ENCODE measurements at regions of chr18 and their contacts with region 1.

Region 1: GRCh38 chr18:36441426-36442240 is 144.1 kb downstream of the FHOD3 start:
- DNase-seq: no peak
- ATAC-seq: peak; percentile 10; the same call in 2 of the 3 replicates
- H3K4me3 ChIP-seq: no peak overlapping the region
- H3K27ac ChIP-seq: no peak overlapping the region
- H3K4me1 ChIP-seq: no peaks in the 10 kb centered on the region
- H3K27me3 ChIP-seq: no peaks in the 10 kb centered on the region
- CTCF ChIP-seq: no peak
- EP300 ChIP-seq: peak in 1 of 2 experiments; percentile 16; a peak in 1 of 4 replicates
- POLR2A ChIP-seq: no peak
- RAD21 ChIP-seq: no peak

Region 2: DNA sequence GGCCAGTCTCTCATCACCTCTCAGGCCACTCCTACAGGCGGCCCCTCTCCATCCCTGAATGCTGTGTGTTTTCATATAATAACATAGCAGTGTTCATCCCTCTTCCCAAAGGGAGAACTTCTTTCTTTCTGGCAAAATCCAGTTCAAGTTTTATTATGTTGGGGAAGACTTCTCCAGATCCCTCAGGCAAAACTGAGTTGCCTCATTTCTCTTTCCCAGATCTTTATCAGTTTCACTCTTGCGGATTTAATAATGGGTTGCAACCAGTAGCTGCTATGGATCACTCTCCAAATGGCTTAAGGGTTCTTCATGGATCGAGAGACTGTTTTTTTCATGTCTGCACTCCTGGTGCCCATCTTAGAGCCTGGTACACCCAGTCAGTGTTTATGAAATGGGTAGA is 14.3 kb before region 1 on chr18:
- CTCF ChIA-PET with region 1: interaction called, 83 read pairs
- POLR2A ChIA-PET with region 1: interaction called, 5 read pairs
- RAD21 ChIA-PET with region 1: interaction called, 34 read pairs
- SMC1A ChIA-PET with region 1: interaction called, 253 read pairs
- in situ Hi-C with region 1: no loop called
- intact Hi-C with region 1: no loop called
- DNase-seq: no peak
- ATAC-seq: no peak
- H3K4me3 ChIP-seq: no peak overlapping the region
- H3K27ac ChIP-seq: no peak overlapping the region
- H3K4me1 ChIP-seq: no peaks in the 10 kb centered on the region
- H3K27me3 ChIP-seq: no peaks in the 10 kb centered on the region
- CTCF ChIP-seq: no peak
- EP300 ChIP-seq: no peak
- POLR2A ChIP-seq: no peak
- RAD21 ChIP-seq: no peak

Region 3: DNA sequence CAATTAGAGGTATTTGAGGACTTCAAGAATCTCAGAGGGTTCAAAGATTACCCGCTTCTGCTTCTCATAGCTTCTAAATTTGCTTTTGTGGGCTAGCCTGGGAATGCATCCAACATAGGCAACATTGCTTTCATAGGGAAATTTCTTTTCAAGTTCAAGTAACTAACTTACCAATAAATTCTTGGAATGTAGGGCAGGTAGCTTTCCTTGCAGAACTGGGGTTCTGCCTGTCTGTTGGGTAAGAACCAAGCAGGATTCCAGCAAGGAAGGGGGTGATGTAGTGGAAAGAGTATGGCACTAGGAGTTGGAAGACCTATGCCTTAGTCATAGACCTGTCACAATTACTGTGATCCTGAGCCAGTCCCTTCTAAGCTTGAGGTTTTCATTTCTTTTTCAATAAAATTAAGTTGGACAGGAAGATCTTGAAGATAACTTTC is 19.9 kb after region 1 on chr18:
- CTCF ChIA-PET with region 1: interaction called, 12 read pairs
- POLR2A ChIA-PET with region 1: interaction called, 30 read pairs
- RAD21 ChIA-PET with region 1: interaction called, 21 read pairs
- SMC1A ChIA-PET with region 1: interaction called, 136 read pairs
- in situ Hi-C with region 1: no loop called
- intact Hi-C with region 1: no loop called
- DNase-seq: no peak
- ATAC-seq: no peak
- H3K4me3 ChIP-seq: no peak overlapping the region
- H3K27ac ChIP-seq: no peak overlapping the region
- H3K4me1 ChIP-seq: no peaks in the 10 kb centered on the region
- H3K27me3 ChIP-seq: no peaks in the 10 kb centered on the region
- CTCF ChIP-seq: no peak
- EP300 ChIP-seq: no peak
- POLR2A ChIP-seq: no peak
- RAD21 ChIP-seq: no peak

Measured in GM12878 (cell line).